Gastrocnemius medialis (tissue), 4 donors: ENCODE measurements at regions of chr16 and their contacts with region 1.

Region 1: GRCh38 chr16:7268182-7268581 is 64.5 kb upstream of the RBFOX1 start:
- DNase-seq: peak; percentile 17 to 60
- ATAC-seq: peak; percentile 67 to 68
- H3K4me3 ChIP-seq: no peak overlapping the region
- H3K27ac ChIP-seq: peak overlapping the region; percentile 36 to 77 (median 70)
- H3K4me1 ChIP-seq: peaks cover 11 to 28% of the 10 kb centered on the region in 2 donors
- H3K27me3 ChIP-seq: no peaks in the 10 kb centered on the region
- CTCF ChIP-seq: peak; percentile 63 to 81 (median 75)
- POLR2A ChIP-seq: no peak

Region 2: GRCh38 chr16:7405166-7405852 is 137.1 kb after region 1 on chr16:
- in situ Hi-C with region 1: no loop called
- intact Hi-C with region 1: loop called (anchors 5 kb)
- DNase-seq: peak; percentile 70 to 86
- ATAC-seq: peak; percentile 93 to 97
- H3K4me3 ChIP-seq: peak overlapping the region in 1 of 4 donors; percentile 31
- H3K27ac ChIP-seq: peak overlapping the region; percentile 55 to 75 (median 66)
- H3K4me1 ChIP-seq: peaks cover 45 to 50% of the 10 kb centered on the region in 2 donors
- H3K27me3 ChIP-seq: no peaks in the 10 kb centered on the region
- CTCF ChIP-seq: peak; percentile 48 to 75 (median 59)
- POLR2A ChIP-seq: no peak

Region 3: DNA sequence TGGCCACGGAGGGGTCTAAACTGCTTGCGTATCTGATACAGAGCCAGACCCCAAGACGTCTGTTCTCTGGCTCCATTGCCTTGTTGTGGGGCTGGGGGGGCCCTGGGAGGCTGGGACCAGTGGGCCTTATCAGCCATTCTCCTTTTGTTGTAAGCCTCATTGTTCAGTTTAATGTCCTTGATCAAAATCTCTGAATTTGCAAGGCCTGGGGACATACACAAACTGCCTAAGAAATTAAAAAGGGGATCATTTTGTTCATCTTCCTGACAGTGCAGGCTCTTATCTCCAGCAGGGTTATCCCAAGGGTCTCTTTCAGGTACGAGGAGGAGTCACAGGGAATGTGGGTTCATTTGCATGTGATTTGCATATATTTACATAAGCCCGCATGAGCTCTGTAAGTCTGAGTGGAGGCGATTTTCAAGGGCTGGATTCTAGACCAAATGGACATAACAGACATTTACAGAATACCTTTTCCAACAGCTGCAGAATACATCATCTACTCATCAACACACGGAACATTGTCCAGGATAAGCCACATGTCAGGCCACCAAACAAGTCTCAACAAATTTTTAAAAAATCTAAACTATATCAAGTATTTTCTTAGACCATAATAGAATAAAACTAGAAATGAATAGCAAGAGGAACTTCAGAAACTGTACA is 334.2 kb after region 1 on chr16:
- in situ Hi-C with region 1: loop called in 1 of 4 experiments (anchors 25 kb)
- intact Hi-C with region 1: loop called (anchors 5 kb)
- DNase-seq: no peak
- ATAC-seq: no peak
- H3K4me3 ChIP-seq: no peak overlapping the region
- H3K27ac ChIP-seq: no peak overlapping the region
- H3K4me1 ChIP-seq: peaks cover 33 to 43% of the 10 kb centered on the region in 2 donors
- H3K27me3 ChIP-seq: no peaks in the 10 kb centered on the region
- CTCF ChIP-seq: no peak
- POLR2A ChIP-seq: no peak

Region 4: GRCh38 chr16:7624871-7625766 is 356.9 kb after region 1 on chr16:
- in situ Hi-C with region 1: loop called in 2 of 4 experiments (anchors 10 to 25 kb)
- intact Hi-C with region 1: no loop called
- DNase-seq: no peak
- ATAC-seq: no peak
- H3K4me3 ChIP-seq: no peak overlapping the region
- H3K27ac ChIP-seq: no peak overlapping the region
- H3K4me1 ChIP-seq: no peaks in the 10 kb centered on the region
- H3K27me3 ChIP-seq: no peaks in the 10 kb centered on the region
- CTCF ChIP-seq: no peak
- POLR2A ChIP-seq: no peak